Ascending aorta (tissue), 2 donors: ENCODE measurements at regions of chr2 and their contacts with region 1.

Region 1: GRCh38 chr2:134411828-134412638 is 158.2 kb downstream of the MGAT5 start:
- DNase-seq: peak in 1 of 2 donors; percentile 84
- H3K4me3 ChIP-seq: no peak overlapping the region
- H3K27ac ChIP-seq: no peak overlapping the region
- H3K4me1 ChIP-seq: peaks cover 3 to 6% of the 10 kb centered on the region in 2 donors
- H3K27me3 ChIP-seq: no peaks in the 10 kb centered on the region
- CTCF ChIP-seq: peak; percentile 63 to 82 (median 71)

Region 2: GRCh38 chr2:134207564-134208209 is 204.3 kb before region 1 on chr2:
- intact Hi-C with region 1: loop called (anchors 5 kb)
- DNase-seq: peak in 1 of 2 donors; percentile 68
- H3K4me3 ChIP-seq: no peak overlapping the region
- H3K27ac ChIP-seq: no peak overlapping the region
- H3K4me1 ChIP-seq: peaks cover 0 to 17% of the 10 kb centered on the region in 2 donors
- H3K27me3 ChIP-seq: no peaks in the 10 kb centered on the region
- CTCF ChIP-seq: peak; percentile 43 to 68 (median 63)

Region 3: DNA sequence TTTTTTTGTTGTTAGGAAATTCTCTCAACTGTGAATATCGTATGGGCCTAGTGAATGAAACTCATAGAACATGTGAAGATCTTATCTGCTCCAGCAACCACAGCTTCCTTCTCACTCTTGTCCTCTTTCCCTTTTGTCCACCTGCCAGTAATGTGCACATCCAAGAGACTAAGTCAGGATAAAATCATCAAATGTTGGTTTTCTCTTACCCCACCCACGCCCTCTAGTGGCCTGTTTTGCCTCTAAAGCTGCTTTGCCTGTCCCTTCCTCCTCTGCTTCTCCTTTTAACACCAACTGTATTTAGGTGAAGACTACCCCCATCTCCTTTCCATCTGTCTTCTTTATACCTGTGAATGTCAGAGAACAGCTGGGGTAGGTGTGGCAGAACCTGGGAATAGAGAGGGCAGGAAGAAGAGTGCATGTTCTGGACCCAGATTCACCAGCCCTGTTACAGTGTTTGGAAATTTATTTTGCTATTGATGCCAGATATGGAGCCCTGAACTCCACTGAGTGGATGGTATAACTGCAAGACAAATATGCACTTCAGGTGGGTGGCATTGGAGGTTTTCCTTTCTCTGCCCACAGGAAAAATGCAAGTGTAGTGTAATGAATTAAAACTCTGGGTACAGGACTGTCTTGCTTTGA is 166.6 kb before region 1 on chr2:
- intact Hi-C with region 1: loop called (anchors 1 kb)
- DNase-seq: peak in 1 of 2 donors; percentile 89
- H3K4me3 ChIP-seq: no peak overlapping the region
- H3K27ac ChIP-seq: no peak overlapping the region
- H3K4me1 ChIP-seq: peaks cover 0 to 3% of the 10 kb centered on the region in 2 donors
- H3K27me3 ChIP-seq: no peaks in the 10 kb centered on the region
- CTCF ChIP-seq: peak; percentile 36 to 67 (median 65)

Region 4: DNA sequence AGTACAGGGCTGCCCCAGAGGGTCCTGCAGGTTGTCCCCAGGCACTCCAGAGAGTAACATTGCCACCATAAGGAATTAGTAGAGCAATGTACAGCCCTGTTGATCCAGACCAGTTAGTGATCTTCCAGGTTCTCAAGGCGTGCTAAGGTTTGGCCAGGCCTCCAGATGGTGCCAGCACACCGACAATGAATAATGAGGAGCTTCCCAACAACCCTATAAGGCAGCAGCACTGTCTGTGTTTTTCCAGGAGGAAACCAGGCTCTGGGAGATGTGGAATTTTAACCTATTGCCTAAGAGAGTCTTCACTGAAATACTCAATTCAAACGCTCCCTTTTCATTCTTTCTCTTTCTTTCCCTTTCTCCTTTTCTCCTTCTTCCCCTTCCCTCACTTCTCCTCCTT is 36.1 kb before region 1 on chr2:
- intact Hi-C with region 1: loop called (anchors 1 kb)
- DNase-seq: peak in 1 of 2 donors; percentile 73
- H3K4me3 ChIP-seq: no peak overlapping the region
- H3K27ac ChIP-seq: peak overlapping the region in 1 of 2 donors; percentile 27
- H3K4me1 ChIP-seq: peaks cover 0 to 5% of the 10 kb centered on the region in 2 donors
- H3K27me3 ChIP-seq: no peaks in the 10 kb centered on the region
- CTCF ChIP-seq: peak; percentile 36 to 62 (median 44)

Region 5: GRCh38 chr2:134603966-134604365 is 191.9 kb after region 1 on chr2:
- intact Hi-C with region 1: no loop called
- DNase-seq: no peak
- H3K4me3 ChIP-seq: no peak overlapping the region
- H3K27ac ChIP-seq: no peak overlapping the region
- H3K4me1 ChIP-seq: no peaks in the 10 kb centered on the region
- H3K27me3 ChIP-seq: no peaks in the 10 kb centered on the region
- CTCF ChIP-seq: no peak